ENCODE measurements at regions of chr12 and their contacts with region 1.

Region 1: GRCh38 chr12:55829967-55830600 is 697 bp upstream of the DNAJC14 start:
- DNase-seq: peak; percentile 58 to 83
- H3K4me3 ChIP-seq: peak overlapping the region; percentile 88 to 98 (median 92)
- H3K27ac ChIP-seq: peak overlapping the region; percentile 75 to 99 (median 96)
- H3K4me1 ChIP-seq: peaks cover 30 to 69% (median 58%) of the 10 kb centered on the region in 4 donors
- H3K27me3 ChIP-seq: no peaks in the 10 kb centered on the region
- CTCF ChIP-seq: no peak
- EP300 ChIP-seq: no peak
- POLR2A ChIP-seq: no peak

Region 2: DNA sequence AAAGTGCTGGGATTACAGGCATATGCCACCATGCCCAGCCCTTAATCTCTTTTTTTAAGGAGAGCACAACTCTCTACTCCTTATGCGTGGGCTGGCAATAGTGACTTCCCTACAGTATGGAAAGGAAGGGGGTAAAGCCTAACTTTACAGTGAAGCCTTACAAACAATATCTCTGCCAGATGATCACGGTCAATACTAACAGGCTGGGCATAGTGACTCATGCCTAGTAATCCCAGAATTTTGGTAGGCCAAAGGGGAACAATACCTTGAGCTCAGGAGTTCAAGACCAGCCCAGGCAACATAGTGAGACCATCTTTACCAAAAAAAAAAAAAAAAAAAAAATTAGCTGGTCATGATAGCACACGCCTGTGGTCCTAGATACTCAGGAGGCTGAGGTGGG is 92.0 kb after region 1 on chr12:
- intact Hi-C with region 1: loop called (anchors 5 kb)
- DNase-seq: no peak
- H3K4me3 ChIP-seq: no peak overlapping the region
- H3K27ac ChIP-seq: no peak overlapping the region
- H3K4me1 ChIP-seq: peaks cover 9 to 54% (median 33%) of the 10 kb centered on the region in 4 donors
- H3K27me3 ChIP-seq: no peaks in the 10 kb centered on the region
- CTCF ChIP-seq: no peak
- EP300 ChIP-seq: no peak
- POLR2A ChIP-seq: no peak

Measured in stomach (tissue), 19 donors.